Activated CD4-positive, alpha-beta memory T cell treated with anti-CD3 and anti-CD28 coated beads, Interleukin-2, amount 10 ng/mL, durations not matched to agents 7 days and 5 days (primary cell): ENCODE measurements at regions of chr2 and their contacts with region 1.

Region 1: DNA sequence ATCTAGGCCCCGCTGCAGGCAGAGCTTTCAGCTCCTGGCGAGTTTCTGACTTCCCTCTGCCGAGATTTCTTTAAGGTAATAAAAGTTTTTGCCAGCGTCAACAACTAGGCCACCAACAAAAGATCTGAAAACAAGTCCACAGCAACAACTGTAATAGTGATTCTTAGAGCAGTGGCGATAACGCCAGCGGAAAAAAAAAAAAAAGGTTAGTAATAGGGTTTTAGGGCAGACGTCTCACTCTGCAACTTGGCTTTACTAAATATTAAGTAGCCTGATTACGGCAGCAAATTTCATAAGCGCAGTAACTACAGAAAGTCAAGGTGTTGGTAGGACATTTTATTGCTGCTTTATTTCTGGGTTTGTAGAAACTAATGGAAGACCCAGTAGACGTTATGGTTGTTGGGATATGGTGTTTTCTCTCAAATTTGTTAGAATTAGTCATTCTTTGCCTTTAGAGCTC is 481 bp downstream of the SLC30A6 start:
- DNase-seq: no peak
- H3K4me3 Mint-ChIP-seq: peak overlapping the region; percentile 85
- H3K27ac Mint-ChIP-seq: peak overlapping the region; percentile 89
- H3K4me1 Mint-ChIP-seq: peaks cover 37% of the 10 kb centered on the region
- H3K27me3 Mint-ChIP-seq: no peaks in the 10 kb centered on the region

Region 2: DNA sequence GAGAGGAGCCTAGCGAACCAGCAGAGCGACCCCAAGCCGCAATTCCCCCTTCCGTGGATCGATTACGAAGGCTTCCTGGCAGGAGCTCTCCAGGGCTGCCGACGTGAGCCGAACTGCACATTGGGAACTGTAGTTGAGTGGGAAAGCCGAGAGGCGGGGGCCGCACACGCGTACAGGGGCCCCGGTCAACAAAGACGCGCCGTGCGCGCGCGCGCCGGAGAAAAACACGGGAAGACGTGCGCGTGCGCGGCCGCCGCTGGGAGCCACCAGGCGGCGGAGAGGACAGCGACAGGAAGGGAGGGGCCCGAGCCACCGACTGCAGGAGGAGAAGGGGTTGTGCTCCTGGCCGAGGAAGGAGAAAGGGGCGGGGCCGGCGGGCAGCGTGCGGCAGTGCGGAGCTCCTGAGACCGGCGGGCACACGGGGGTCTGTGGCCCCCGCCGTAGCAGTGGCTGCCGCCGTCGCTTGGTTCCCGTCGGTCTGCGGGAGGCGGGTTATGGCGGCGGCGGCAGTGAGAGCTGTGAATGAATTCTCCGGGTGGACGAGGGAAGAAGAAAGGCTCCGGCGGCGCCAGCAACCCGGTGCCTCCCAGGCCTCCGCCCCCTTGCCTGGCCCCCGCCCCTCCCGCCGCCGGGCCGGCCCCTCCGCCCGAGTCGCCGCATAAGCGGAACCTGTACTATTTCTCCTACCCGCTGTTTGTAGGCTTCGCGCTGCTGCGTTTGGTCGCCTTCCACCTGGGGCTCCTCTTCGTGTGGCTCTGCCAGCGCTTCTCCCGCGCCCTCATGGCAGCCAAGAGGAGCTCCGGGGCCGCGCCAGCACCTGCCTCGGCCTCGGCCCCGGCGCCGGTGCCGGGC is 102.6 kb before region 1 on chr2 and contains the start of gene SPAST:
- CTCF ChIA-PET with region 1: interaction called, 5 read pairs
- POLR2A ChIA-PET with region 1: interaction called, 18 read pairs
- DNase-seq: peak; percentile 97
- H3K4me3 Mint-ChIP-seq: peak within 1 kb of the TSS; percentile 94
- H3K27ac Mint-ChIP-seq: peak within 1 kb of the TSS; percentile 86
- H3K4me1 Mint-ChIP-seq: peaks cover 31% of the 10 kb centered on the region
- H3K27me3 Mint-ChIP-seq: peaks cover 2% of the 10 kb centered on the region
- total RNA-seq, gene SPAST: 21.1 to 21.8 TPM

Region 3: GRCh38 chr2:32189011-32189410 is 22.9 kb after region 1 on chr2:
- CTCF ChIA-PET with region 1: interaction called, 4 read pairs
- POLR2A ChIA-PET with region 1: interaction called, 41 read pairs
- DNase-seq: no peak
- H3K4me3 Mint-ChIP-seq: no peak overlapping the region
- H3K27ac Mint-ChIP-seq: peak overlapping the region; percentile 42
- H3K4me1 Mint-ChIP-seq: peaks cover 32% of the 10 kb centered on the region
- H3K27me3 Mint-ChIP-seq: no peaks in the 10 kb centered on the region

Region 4: DNA sequence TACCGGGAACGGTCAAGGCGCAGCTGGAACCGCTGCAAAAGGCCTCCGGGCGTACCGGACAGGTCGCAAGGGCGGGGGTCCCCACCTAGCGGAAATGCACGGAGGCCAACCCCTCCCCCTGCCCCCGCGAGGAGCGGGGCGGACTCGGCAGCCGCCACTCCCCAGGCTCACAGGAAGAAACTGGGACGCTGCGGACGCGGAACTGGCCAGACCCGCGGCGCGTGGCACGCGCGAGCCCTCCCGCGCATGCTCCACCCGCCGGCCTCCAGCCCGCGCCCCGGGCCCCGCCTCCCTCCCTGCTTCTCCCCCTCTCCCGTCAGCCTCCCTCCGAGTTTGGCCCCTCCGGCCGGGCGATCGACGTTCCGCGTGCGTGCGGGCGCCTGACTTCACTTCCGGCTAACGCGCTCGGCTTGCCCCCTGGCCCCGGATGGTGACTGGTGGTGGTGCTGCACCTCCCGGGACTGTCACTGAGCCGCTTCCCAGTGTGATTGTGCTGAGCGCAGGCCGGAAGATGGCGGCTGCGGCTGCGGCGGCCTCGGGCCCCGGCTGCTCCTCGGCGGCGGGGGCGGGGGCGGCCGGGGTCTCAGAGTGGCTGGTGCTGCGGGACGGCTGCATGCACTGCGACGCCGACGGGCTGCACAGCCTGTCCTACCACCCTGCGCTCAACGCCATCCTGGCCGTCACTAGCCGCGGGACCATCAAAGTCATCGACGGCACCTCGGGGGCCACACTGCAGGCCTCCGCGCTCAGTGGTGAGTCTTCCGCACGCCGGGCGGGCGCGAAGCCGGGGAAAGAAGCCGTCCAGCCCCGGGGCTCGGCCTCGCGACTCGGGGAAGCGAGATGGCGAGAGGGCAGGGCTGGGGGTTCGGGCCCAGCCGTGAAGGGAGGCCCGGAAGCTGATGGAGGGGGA is 190.8 kb after region 1 on chr2 and contains the start of gene BIRC6:
- CTCF ChIA-PET with region 1: no interaction called
- POLR2A ChIA-PET with region 1: interaction called, 13 read pairs
- DNase-seq: peak; percentile 96
- H3K4me3 Mint-ChIP-seq: peak within 1 kb of the TSS; percentile 88
- H3K27ac Mint-ChIP-seq: peak within 1 kb of the TSS; percentile 93
- H3K4me1 Mint-ChIP-seq: peaks cover 38% of the 10 kb centered on the region
- H3K27me3 Mint-ChIP-seq: no peaks in the 10 kb centered on the region
- total RNA-seq, gene BIRC6: 95.0 to 103 TPM

Region 5: DNA sequence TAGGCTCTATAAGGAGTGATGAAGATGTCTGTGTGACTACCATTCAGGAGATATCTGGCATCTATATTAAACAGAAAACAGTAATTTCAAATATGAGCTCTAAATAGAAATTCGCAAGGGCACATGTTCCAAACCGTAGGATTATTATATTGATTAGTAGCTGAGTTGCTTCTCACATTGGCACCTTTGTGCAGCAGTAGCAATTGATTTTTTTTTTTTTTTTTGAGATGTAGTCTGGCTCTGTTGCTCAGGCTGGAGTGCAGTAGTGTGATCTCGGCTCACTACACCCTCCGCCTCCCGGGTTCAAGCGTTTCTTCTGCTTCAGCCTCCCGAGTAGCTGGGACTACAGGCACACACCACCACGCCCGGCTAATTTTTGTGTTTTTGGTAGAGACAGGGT is 203.1 kb after region 1 on chr2:
- CTCF ChIA-PET with region 1: no interaction called
- POLR2A ChIA-PET with region 1: no interaction called
- DNase-seq: no peak
- H3K4me3 Mint-ChIP-seq: no peak overlapping the region
- H3K27ac Mint-ChIP-seq: no peak overlapping the region
- H3K4me1 Mint-ChIP-seq: peaks cover 9% of the 10 kb centered on the region
- H3K27me3 Mint-ChIP-seq: no peaks in the 10 kb centered on the region